GM10248 (cell line): ENCODE measurements at regions of chr3 and their contacts with region 1.

Region 1: GRCh38 chr3:11379233-11379823 is 107.1 kb downstream of the ATG7 start:
- DNase-seq: peak; percentile 26
- CTCF ChIP-seq: peak; percentile 50

Region 2: GRCh38 chr3:10703875-10704274 is 675.5 kb before region 1 on chr3:
- CTCF ChIA-PET with region 1: no interaction called
- POLR2A ChIA-PET with region 1: no interaction called
- DNase-seq: no peak
- CTCF ChIP-seq: no peak

Region 3: DNA sequence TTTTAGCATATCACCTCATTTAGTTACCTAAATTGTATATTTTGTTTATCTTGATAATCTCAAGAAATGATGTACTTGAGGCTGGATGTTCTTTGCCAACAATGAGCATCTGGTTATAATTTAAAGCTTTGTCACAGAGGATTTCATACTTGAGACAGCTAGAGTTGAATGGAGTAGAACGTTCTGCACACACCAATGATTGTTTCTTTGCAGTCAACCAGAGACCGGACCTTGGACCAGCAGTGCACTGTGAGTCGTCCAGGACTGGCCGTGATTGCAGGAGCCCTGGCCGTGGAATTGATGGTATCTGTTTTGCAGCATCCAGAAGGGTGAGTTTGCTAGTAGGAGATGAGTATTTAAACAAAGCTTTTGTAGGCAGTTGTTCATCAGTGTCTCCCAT is 16.7 kb before region 1 on chr3:
- CTCF ChIA-PET with region 1: interaction called, 14 read pairs
- POLR2A ChIA-PET with region 1: no interaction called
- DNase-seq: no peak
- CTCF ChIP-seq: no peak

Region 4: GRCh38 chr3:11392014-11392859 is 12.9 kb after region 1 on chr3:
- CTCF ChIA-PET with region 1: interaction called, 31 read pairs
- POLR2A ChIA-PET with region 1: no interaction called
- DNase-seq: no peak
- CTCF ChIP-seq: no peak